ENCODE measurements at regions of chr17 and their contacts with region 1.

Region 1: DNA sequence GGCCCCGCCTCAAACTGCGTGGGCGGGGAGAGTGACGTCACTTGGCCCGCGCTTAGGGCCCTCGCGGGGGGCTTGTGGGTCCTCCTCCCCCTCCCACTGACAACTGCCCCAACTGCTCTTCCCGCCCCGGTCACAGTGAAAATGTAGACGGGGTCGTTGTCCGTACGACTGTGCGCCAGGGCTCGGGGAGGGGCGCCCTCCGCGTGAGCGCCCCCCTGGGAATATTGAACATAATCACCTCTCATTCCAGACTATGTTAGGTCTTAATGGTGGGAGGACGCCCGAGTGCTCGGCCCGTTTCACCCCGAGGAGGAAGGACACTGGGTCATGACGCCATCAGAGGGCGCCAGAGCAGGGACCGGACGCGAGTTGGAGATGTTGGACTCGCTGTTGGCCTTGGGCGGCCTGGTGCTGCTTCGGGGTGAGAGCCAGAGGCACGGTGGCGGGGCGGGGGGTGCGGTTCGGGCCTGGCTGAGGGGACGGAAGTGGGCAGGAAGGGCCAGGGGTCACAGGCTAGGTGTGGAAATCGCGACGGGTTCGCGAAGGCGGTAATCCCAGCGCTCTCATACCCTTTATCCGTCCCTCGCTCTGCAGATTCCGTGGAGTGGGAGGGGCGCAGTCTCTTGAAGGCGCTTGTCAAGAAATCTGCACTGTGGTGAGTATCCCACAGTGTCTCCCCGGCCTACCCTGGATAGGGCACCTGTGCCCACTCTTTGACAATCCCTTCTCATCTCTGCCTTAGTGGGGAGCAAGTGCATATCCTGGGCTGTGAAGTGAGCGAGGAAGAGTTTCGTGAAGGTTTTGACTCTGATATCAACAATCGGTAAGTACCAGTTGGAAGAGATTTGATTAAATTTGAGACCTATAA is at the start of gene ELP5:
- DNase-seq: peak; percentile 97
- total RNA-seq, gene ELP5: 57.5 TPM

Region 2: GRCh38 chr17:7239091-7240027 is 13.1 kb before region 1 on chr17 and contains the start of gene PHF23:
- intact Hi-C with region 1: loop called (anchors 1 kb)
- DNase-seq: peak; percentile 100
- total RNA-seq, gene PHF23: 20.5 TPM

Region 3: DNA sequence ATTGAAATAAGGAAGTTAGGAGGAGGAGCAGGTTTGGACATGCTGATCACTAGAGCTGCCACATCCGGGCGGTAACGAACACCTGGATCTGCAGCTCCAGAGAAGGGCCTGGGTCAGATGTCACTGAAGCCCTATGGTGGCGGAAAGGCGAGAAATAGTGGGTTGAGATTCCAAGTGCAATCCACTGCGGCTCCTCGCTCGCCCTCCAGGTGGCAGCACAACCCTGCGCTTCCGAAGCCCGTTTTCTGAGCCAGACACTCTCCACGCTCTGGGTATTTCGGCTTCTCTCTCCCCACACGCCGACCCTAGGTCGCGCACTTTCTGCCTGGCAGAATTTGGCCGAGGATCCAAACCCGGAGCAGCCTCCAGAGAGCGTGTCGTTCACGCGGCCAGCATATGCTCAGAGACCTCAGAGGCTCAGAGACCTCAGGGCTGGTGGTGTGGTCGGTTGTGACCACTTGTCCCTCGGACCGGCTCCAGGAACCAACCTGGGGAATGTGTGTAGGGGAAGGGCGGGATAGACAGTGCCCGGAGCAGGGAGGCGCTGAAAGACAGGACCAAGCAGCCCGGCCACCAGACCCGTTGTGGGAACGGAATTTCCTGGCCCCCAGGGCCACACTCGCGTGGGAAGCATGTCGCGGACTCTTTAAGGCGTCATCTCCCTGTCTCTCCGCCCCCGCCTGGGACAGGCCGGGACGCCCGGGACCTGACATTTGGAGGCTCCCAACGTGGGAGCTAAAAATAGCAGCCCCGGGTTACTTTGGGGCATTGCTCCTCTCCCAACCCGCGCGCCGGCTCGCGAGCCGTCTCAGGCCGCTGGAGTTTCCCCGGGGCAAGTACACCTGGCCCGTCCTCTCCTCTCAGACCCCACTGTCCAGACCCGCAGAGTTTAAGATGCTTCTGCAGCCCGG is 28.4 kb after region 1 on chr17:
- intact Hi-C with region 1: loop called (anchors 1 kb)
- DNase-seq: peak; percentile 89

Region 4: DNA sequence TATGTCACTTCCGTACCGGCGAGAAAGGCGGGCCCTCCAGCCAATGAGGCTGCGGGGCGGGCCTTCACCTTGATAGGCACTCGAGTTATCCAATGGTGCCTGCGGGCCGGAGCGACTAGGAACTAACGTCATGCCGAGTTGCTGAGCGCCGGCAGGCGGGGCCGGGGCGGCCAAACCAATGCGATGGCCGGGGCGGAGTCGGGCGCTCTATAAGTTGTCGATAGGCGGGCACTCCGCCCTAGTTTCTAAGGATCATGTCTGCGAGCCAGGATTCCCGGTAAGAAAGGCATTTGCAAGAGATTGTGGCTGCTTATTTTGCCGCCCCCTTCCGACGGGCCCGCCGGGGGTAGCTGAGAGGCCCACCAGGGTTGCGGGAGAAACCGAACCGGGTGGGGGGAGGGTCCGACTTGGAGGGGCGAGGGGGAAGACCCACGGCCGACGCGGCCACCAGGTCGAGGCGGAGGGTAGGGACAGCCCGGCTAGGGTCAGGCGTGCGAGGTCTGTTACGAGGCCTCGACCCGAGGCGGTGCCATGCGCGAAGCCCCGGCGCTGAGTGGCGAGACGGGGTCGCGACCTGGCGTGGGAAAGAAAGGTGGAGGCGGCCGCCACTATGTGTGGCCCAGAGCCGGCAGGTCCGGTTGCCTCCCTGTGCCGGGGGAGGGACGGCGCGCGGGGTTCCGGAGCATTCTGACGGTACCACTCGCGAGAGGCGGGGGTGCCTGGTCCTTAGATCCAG is 320.3 kb after region 1 on chr17:
- intact Hi-C with region 1: loop called (anchors 5 kb)
- DNase-seq: peak; percentile 99

Measured in cardiac septum (tissue), 1 donor.